Aorta (tissue), 5 donors: ENCODE measurements at regions of chr15 and their contacts with region 1.

Region 1: GRCh38 chr15:65101411-65101890 is 13.5 kb downstream of the UBAP1L start:
- DNase-seq: peak; percentile 82 to 93
- ATAC-seq: peak; percentile 74
- H3K4me3 ChIP-seq: no peak overlapping the region
- H3K27ac ChIP-seq: no peak overlapping the region
- H3K4me1 ChIP-seq: no peaks in the 10 kb centered on the region
- H3K27me3 ChIP-seq: no peaks in the 10 kb centered on the region

Region 2: DNA sequence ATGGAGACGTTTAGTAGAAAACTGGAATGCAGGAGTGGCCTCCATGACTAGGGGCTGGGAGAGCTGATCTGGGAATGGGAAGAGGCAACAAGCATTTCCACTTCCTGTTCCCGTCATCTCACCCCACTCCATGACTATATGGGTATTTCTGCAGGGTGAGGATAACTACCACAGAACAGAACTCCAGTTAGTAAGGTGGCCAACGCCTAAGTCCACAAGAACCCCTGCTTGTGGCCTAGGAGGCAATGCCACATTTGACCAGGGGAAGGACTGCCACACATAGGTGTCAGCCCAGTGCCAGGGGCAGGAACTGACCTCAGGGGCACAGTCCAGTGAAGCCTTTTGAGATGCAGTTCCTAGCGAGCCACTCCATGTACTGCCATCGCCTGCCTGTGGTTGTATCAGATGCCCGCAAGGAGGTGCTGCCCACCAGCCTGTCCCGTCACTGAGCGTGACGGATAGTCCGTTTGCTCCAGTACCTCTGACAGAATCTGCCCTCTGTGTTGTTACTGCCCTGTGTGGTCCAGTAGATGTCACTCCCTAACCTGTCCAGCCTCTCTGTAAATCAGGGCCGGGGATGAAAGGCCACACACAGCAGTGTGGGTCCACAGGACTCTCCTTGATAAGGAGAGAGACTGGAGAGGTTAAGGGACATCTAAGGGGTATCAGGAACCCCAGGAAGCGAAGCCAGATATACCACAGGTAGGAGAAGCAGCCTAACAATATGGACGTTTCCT is 68.5 kb before region 1 on chr15:
- intact Hi-C with region 1: loop called (anchors 1 kb)
- DNase-seq: peak; percentile 72 to 87
- ATAC-seq: peak; percentile 85
- H3K4me3 ChIP-seq: no peak overlapping the region
- H3K27ac ChIP-seq: no peak overlapping the region
- H3K4me1 ChIP-seq: no peaks in the 10 kb centered on the region
- H3K27me3 ChIP-seq: no peaks in the 10 kb centered on the region

Region 3: DNA sequence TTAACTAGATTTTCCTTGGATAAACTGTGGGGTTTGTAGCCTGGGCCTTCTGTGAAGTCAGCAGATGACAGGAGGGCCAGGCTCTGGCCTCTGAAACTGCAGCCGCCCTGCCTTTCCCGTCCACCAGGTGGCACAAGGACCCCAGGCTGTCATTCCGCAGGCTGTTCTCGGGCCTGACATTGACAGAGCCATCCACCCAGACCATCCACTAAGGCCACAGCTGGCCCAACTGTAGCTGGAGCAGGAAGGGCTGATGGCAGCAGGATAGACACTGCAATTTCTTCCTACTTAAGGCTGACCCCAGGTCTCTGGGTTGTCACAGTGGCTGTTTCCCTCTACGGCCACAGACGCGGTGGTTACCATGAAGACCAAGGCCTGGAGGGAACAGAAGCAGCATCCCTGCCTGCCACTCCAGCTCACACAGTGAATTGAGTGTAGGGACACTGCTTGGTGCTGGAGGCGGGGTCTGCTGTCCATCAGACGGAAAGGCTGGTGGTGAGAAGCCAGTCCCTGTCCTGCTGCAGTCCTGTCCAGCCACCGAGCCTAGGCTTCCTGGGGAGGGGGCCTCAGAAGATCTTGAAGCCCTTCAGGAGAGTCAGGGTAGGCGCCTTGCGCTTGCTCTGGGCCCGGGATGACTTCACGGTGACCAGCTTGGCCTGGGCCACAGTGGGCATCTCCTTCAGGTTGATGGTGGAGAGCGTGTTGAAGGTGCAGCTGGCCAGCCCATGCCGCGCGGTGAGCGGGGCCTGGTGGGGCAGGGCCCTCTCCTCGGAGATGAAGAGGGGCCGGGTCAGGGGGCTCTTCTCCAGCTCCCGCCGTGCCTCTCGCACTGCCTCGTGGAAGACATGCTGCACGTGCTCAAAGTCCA is 46.9 kb before region 1 on chr15:
- intact Hi-C with region 1: loop called (anchors 1 to 5 kb)
- DNase-seq: peak; percentile 81 to 91
- ATAC-seq: peak; percentile 82
- H3K4me3 ChIP-seq: no peak overlapping the region
- H3K27ac ChIP-seq: peak overlapping the region in 1 of 2 donors; percentile 82
- H3K4me1 ChIP-seq: no peaks in the 10 kb centered on the region
- H3K27me3 ChIP-seq: no peaks in the 10 kb centered on the region

Region 4: DNA sequence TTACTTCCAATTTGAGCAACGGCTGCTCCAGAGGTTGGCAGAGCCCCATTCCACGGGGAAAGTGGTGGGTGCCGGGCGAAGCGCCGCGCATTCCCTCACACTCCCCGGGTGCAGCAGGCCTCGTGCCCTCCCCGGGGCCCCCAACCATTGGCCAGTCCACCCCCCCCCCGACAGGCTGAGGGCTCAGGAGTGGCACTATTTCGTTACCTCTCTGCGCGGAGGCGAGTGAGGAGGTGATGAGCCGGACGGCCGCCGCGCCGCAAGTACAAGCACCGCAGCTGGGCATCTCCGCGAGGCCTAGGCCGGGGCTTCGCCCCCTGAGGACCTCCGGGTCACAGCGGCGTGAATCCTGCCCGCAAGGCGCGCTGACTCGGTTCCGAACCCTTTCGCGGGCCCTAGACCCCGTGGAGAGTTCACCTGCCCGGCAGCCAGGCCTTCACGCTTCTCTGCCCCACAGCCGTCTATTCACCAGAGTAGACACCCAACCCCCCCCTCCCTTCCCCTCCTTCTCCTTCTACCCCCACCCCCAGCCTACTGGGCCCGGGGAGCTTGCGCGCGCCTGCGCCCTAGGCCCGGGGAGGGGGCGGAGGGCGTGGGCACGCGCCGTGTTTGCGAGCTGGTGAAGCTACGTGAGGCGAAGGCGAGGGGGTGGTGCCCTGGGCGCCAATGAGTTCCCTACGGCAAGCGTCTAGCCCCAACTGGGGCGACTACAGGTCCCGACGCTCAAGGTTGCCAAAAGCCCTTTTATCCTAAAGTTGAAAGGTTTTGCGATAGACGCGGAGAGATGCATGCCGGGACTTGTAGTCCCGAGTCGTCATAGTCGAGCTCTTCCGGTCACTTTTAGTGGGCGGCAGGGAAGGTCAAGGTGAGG is 83.7 kb after region 1 on chr15 and contains the start of gene CLPX:
- intact Hi-C with region 1: no loop called
- DNase-seq: peak; percentile 96 to 97
- ATAC-seq: peak; percentile 98
- H3K4me3 ChIP-seq: peak within 1 kb of the TSS; percentile 86 to 90
- H3K27ac ChIP-seq: peak within 1 kb of the TSS; percentile 75 to 88
- H3K4me1 ChIP-seq: no peaks in the 10 kb centered on the region
- H3K27me3 ChIP-seq: no peaks in the 10 kb centered on the region
- total RNA-seq, gene CLPX: 33.4 to 43.9 TPM